Natural killer cell (primary cell): ENCODE measurements at regions of chr1 and their contacts with region 1.

Region 1: DNA sequence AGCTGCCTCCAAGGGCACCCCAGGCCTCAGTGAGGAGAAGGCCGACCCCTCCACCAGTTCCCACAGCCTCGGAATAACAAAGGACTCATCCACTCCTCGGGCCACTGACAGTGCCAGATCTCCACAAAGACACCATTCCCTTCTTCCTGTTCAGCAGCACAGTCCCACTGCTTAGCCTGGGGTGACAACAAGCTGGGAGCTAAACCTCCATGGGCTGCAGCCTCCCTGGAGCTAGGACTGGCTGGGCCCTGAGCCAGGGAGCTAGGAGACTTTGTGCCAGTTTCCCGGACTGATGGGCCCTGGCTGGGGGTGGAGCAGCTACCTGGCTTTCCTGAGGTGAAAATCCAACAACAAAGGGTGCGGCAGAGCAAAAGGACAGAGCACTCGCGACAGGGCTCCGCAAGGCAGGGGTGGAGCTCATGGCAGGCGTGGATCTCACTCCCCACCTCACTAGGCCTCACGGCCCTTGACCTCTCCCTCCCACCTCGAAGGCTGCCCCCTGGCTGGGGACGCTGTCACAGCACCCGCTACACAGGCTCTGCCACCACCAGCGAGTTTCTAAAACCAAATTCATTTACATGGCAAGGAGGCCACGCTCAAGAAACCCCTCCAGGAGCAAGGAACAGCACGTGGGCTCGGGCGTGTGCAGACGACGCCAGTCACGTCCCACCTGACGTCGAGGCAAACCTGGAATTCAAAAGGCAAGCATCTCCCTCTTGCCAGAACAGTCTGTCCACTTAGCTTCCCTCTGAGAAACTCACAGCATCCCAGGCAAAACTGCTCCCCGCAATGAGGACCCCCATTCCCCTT is 13.8 kb downstream of the SLC35E2B start:
- DNase-seq: peak; percentile 48 to 62
- ATAC-seq: peak; percentile 71 to 83 (median 75)
- H3K4me3 ChIP-seq: no peak overlapping the region
- H3K4me3 Mint-ChIP-seq: peak overlapping the region; percentile 88
- H3K27ac ChIP-seq: peak overlapping the region; percentile 73
- H3K27ac Mint-ChIP-seq: peak overlapping the region; percentile 94 to 95
- H3K4me1 ChIP-seq: peaks cover 28% of the 10 kb centered on the region
- H3K4me1 Mint-ChIP-seq: peaks cover 21 to 28% of the 10 kb centered on the region in 2 donors
- H3K27me3 ChIP-seq: no peaks in the 10 kb centered on the region
- H3K27me3 Mint-ChIP-seq: no peaks in the 10 kb centered on the region
- CTCF ChIP-seq: peak; percentile 59

Region 2: GRCh38 chr1:1574721-1575537 is 103.9 kb before region 1 on chr1 and contains the start of gene SSU72:
- intact Hi-C with region 1: loop called (anchors 10 kb)
- DNase-seq: peak; percentile 97
- ATAC-seq: peak; percentile 82 to 91 (median 85)
- H3K4me3 ChIP-seq: peak within 1 kb of the TSS; percentile 84
- H3K4me3 Mint-ChIP-seq: peak within 1 kb of the TSS; percentile 99
- H3K27ac ChIP-seq: peak within 1 kb of the TSS; percentile 95
- H3K27ac Mint-ChIP-seq: peak within 1 kb of the TSS; percentile 99
- H3K4me1 ChIP-seq: peaks cover 38% of the 10 kb centered on the region
- H3K4me1 Mint-ChIP-seq: peaks cover 25 to 27% of the 10 kb centered on the region in 2 donors
- H3K27me3 ChIP-seq: no peaks in the 10 kb centered on the region
- H3K27me3 Mint-ChIP-seq: peaks cover 0 to 4% of the 10 kb centered on the region in 2 donors
- CTCF ChIP-seq: no peak
- total RNA-seq, gene SSU72: 87.5 to 107 (median 93.9) TPM

Region 3: GRCh38 chr1:1615256-1616044 is 63.3 kb before region 1 on chr1 and contains the start of gene MIB2:
- intact Hi-C with region 1: loop called (anchors 10 kb)
- DNase-seq: peak; percentile 99 to 100
- ATAC-seq: peak; percentile 86 to 96 (median 90)
- H3K4me3 ChIP-seq: peak within 1 kb of the TSS; percentile 91
- H3K4me3 Mint-ChIP-seq: peak within 1 kb of the TSS; percentile 99
- H3K27ac ChIP-seq: peak within 1 kb of the TSS; percentile 100
- H3K27ac Mint-ChIP-seq: peak within 1 kb of the TSS; percentile 94 to 95
- H3K4me1 ChIP-seq: peaks cover 24% of the 10 kb centered on the region
- H3K4me1 Mint-ChIP-seq: peaks cover 18 to 22% of the 10 kb centered on the region in 2 donors
- H3K27me3 ChIP-seq: no peaks in the 10 kb centered on the region
- H3K27me3 Mint-ChIP-seq: no peaks in the 10 kb centered on the region
- CTCF ChIP-seq: no peak
- total RNA-seq, gene MIB2: 44.9 to 54.1 (median 46.0) TPM

Region 4: DNA sequence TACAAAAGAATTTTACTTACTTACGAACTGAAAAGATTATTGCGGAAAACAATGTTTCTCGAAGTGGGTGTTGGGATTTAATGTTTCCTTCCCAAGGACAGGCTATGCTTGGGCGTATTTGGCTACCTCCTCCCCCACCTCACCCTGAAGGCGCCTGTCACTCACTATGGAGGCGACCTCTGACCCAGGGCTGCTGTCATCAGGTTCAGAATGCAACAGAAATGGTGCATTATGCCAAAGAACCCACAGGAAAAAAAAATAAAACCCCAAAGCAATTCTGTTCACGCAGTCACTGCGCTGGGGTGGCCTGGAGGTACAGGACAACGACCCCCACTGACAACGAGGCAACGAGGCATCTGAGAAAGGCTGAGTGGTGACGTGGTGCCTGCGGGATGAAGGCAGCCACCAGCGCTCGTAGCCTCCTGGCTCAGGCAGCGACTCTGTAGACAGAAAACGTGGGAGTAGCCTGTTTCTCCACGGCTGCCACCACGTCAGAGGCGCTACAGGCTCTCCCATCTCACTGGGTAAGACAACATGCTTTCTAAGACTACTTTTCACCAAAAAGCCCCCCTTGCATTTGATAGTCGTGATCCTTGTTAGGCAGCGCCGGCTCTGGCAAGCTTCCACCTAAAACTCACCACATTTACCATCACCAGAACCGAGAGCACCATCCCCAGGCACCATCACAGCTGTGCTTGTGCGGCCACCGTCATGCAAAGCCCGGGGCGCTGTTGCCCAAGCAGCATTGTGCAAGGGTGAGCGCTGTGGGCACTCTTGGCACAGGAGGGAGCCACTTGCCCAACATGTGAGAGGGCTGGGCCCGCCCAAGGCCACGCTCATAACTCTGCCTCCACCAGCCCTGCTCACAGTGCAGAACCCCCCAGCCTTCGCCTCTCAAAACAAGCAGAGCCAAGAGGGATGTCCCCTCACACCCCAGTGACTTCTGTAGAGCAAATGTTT is 85.2 kb after region 1 on chr1:
- intact Hi-C with region 1: no loop called
- DNase-seq: peak in 1 of 2 donors; percentile 34
- ATAC-seq: peak; percentile 44 to 75 (median 55)
- H3K4me3 ChIP-seq: no peak overlapping the region
- H3K4me3 Mint-ChIP-seq: no peak overlapping the region
- H3K27ac ChIP-seq: no peak overlapping the region
- H3K27ac Mint-ChIP-seq: peak overlapping the region in 1 of 2 donors; percentile 35
- H3K4me1 ChIP-seq: peaks cover 10% of the 10 kb centered on the region
- H3K4me1 Mint-ChIP-seq: peaks cover 18% of the 10 kb centered on the region in 2 donors
- H3K27me3 ChIP-seq: no peaks in the 10 kb centered on the region
- H3K27me3 Mint-ChIP-seq: no peaks in the 10 kb centered on the region
- CTCF ChIP-seq: no peak